ENCODE measurements at regions of chr5 and their contacts with region 1.

Region 1: DNA sequence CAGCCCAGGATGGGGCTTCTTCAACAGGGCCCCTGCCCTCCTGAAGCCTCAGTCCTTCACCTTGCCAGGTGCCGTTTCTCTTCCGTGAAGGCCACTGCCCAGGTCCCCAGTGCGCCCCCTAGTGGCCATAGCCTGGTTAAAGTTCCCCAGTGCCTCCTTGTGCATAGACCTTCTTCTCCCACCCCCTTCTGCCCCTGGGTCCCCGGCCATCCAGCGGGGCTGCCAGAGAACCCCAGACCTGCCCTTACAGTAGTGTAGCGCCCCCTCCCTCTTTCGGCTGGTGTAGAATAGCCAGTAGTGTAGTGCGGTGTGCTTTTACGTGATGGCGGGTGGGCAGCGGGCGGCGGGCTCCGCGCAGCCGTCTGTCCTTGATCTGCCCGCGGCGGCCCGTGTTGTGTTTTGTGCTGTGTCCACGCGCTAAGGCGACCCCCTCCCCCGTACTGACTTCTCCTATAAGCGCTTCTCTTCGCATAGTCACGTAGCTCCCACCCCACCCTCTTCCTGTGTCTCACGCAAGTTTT is 23.6 kb downstream of the PCDHGC5 start:
- DNase-seq: peak; percentile 87
- ATAC-seq: peak; percentile 58
- H3K4me3 Mint-ChIP-seq: peak overlapping the region; percentile 43
- H3K27ac Mint-ChIP-seq: peak overlapping the region; percentile 51
- H3K4me1 Mint-ChIP-seq: peaks cover 39% of the 10 kb centered on the region
- H3K27me3 Mint-ChIP-seq: no peaks in the 10 kb centered on the region

Region 2: GRCh38 chr5:141369994-141370848 is 142.2 kb before region 1 on chr5 and contains the start of gene PCDHGB3:
- CTCF ChIA-PET with region 1: interaction called, 22 read pairs
- POLR2A ChIA-PET with region 1: no interaction called
- DNase-seq: peak; percentile 52
- ATAC-seq: peak; percentile 57
- H3K4me3 Mint-ChIP-seq: peak within 1 kb of the TSS; percentile 63
- H3K27ac Mint-ChIP-seq: no peak within 1 kb of the TSS
- H3K4me1 Mint-ChIP-seq: peaks cover 8% of the 10 kb centered on the region
- H3K27me3 Mint-ChIP-seq: peaks cover 45% of the 10 kb centered on the region
- total RNA-seq, gene PCDHGB3: 0.16 to 0.26 TPM

Region 3: DNA sequence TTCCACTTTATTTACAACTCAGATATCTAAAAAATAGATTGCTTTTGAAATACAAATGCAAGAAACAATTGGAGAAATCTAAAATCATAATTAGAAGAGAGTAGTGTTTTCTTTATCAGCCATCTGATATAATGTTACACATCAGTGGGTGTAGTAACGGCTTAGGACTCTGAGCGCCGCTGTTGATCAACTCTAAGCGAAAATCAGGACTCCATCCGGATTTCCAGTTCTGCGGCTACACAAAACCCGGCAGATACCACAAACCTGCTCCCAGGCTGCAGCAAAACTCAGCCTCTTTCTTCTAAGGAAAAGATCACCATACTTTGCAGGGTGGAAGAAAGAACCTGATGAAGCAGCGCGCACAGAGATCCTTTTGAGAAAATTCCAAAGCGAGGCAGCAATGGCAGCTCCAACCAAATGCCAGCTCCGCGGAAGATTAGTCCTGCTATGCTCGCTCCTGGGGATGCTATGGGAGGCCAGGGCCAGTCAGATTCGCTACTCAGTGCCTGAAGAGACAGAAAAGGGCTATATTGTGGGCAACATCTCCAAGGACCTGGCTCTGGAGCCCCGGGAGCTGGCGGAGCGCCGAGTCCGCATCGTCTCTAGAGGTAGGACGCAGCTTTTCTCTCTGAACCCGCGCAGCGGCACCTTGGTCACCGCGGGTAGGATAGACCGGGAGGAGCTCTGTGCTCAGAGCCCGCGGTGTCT is 109.7 kb before region 1 on chr5 and contains the start of gene PCDHGA9:
- CTCF ChIA-PET with region 1: interaction called, 12 read pairs
- POLR2A ChIA-PET with region 1: no interaction called
- DNase-seq: no peak
- ATAC-seq: no peak
- H3K4me3 Mint-ChIP-seq: peak within 1 kb of the TSS; percentile 26
- H3K27ac Mint-ChIP-seq: no peak within 1 kb of the TSS
- H3K4me1 Mint-ChIP-seq: peaks cover 3% of the 10 kb centered on the region
- H3K27me3 Mint-ChIP-seq: peaks cover 46% of the 10 kb centered on the region
- total RNA-seq, gene PCDHGA9: 0.08 TPM in 1 of 2 experiments, not detected in the other

Region 4: DNA sequence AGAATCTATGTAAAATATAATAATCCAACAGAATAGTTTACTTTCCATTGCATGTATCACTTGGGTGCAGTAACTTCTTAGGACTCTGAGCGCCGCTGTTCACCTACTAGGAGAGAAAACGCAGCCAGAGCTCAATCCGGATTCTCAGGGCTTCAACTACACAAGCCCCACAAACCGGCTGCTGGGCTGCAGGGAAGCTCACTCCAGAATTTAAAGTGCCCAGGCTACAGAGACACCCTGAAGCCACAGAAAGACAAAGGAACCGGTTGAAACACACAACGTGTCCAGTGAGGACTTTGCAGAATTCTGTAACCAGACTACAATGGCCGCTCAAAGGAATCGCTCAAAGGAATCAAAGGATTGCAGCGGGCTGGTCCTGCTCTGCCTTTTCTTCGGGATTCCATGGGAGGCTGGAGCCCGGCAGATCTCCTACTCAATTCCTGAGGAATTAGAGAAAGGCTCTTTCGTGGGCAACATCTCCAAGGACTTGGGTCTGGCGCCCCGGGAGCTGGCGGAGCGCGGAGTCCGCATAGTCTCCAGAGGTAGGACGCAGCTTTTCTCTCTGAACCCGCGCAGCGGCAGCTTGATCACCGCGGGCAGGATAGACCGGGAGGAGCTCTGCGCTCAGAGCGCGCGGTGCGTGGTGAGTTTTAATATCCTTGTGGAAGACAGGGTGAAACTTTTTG is 99.5 kb before region 1 on chr5 and contains the start of gene PCDHGA10:
- CTCF ChIA-PET with region 1: interaction called, 36 read pairs
- POLR2A ChIA-PET with region 1: interaction called, 3 read pairs
- DNase-seq: peak; percentile 71
- ATAC-seq: peak; percentile 75
- H3K4me3 Mint-ChIP-seq: peak within 1 kb of the TSS; percentile 71
- H3K27ac Mint-ChIP-seq: no peak within 1 kb of the TSS
- H3K4me1 Mint-ChIP-seq: peaks cover 26% of the 10 kb centered on the region
- H3K27me3 Mint-ChIP-seq: peaks cover 60% of the 10 kb centered on the region
- total RNA-seq, gene PCDHGA10: not detected

Region 5: DNA sequence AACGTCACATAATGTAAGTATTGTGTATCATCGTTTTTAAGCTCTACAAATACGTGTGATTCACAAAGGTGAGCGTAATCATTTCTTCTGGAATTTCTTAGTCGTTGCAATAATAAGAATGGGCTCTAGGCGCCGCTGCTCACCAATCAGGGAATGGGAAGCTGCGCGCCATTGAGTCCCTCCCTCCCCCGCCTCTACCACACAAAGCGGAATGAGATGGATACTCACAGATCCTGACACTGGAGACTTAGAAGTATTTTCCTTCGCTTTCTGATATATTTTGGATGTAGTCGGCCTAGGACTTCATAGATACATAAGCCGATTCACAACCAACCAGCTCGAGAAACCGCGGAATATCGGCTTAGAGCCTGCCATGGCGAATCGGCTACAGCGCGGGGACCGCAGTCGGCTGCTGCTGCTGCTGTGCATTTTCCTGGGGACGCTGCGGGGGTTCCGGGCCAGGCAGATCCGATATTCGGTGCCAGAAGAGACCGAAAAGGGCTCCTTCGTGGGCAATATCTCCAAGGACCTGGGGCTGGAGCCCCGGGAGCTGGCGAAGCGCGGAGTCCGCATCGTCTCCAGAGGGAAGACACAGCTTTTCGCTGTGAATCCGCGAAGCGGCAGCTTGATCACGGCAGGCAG is 91.5 kb before region 1 on chr5 and contains the start of gene PCDHGA11:
- CTCF ChIA-PET with region 1: interaction called, 28 read pairs
- POLR2A ChIA-PET with region 1: no interaction called
- DNase-seq: peak; percentile 53
- ATAC-seq: no peak
- H3K4me3 Mint-ChIP-seq: peak within 1 kb of the TSS; percentile 69
- H3K27ac Mint-ChIP-seq: peak within 1 kb of the TSS; percentile 35
- H3K4me1 Mint-ChIP-seq: peaks cover 11% of the 10 kb centered on the region
- H3K27me3 Mint-ChIP-seq: peaks cover 62% of the 10 kb centered on the region
- total RNA-seq, gene PCDHGA11: 0.05 TPM in 1 of 2 experiments, not detected in the other

Region 6: DNA sequence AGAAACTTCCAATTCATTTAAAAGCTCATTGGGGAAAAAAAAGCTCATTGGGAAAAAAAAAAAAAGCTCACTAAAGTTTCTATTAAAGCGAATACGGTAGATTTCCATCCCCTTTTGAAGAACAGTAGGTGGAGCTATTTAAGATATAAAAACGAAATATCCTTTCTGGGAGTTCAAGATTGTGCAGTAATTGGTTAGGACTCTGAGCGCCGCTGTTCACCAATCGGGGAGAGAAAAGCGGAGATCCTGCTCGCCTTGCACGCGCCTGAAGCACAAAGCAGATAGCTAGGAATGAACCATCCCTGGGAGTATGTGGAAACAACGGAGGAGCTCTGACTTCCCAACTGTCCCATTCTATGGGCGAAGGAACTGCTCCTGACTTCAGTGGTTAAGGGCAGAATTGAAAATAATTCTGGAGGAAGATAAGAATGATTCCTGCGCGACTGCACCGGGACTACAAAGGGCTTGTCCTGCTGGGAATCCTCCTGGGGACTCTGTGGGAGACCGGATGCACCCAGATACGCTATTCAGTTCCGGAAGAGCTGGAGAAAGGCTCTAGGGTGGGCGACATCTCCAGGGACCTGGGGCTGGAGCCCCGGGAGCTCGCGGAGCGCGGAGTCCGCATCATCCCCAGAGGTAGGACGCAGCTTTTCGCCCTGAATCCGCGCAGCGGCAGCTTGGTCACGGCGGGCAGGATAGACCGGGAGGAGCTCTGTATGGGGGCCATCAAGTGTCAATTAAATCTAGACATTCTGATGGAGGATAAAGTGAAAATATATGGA is 81.9 kb before region 1 on chr5 and contains the start of gene PCDHGA12:
- CTCF ChIA-PET with region 1: interaction called, 10 read pairs
- POLR2A ChIA-PET with region 1: interaction called, 4 read pairs
- DNase-seq: peak; percentile 45
- ATAC-seq: no peak
- H3K4me3 Mint-ChIP-seq: peak within 1 kb of the TSS; percentile 63
- H3K27ac Mint-ChIP-seq: peak within 1 kb of the TSS; percentile 62
- H3K4me1 Mint-ChIP-seq: peaks cover 18% of the 10 kb centered on the region
- H3K27me3 Mint-ChIP-seq: peaks cover 40% of the 10 kb centered on the region
- total RNA-seq, gene PCDHGA12: not detected

Region 7: DNA sequence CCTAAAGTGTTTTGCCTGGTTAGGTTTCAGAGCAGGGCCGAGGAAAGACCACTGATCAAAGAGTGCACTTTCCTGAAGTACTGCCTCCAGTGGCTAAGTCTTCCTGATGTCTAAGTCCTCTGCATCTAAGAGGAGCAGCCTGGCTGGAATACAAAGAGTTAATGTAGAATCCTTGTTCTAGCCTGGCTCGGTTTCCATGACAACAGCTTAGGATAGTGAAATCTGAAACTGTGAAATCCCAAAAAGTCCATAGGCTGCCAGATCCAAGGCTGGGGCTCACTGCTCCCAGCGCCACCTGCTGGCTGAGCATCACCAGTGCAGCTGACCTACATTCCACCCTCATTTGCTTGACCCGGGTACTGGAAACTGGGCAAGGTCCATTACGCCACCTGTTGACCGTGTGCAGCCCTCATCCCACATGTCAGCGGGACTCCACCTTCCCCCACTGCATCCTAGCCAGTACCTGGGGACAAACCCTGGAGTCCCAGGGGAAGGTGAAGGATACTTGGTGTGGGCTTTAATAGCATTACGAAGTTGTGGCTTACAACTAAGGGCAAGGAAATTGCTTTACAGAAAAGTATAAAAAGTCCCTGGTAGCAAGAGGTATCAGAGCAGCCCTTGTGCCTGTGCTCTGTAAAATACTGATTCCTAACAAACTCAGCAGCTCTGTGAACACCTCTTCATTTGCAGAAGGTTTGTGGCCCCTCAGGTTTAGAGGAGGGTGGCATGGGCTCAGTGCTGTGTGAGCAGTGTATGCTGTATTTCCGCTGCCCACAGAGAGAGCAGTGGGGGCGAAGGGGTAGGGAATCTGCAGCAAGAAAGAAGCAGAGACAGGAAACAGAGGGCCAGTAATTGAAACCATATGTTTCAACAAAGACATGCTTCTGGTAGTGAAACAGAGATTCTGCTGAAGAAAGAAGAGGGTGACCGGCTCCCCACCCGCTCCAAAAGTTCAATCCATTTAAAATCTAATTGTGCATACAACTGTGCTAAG is 12.5 kb after region 1 on chr5:
- CTCF ChIA-PET with region 1: interaction called, 64 read pairs
- POLR2A ChIA-PET with region 1: no interaction called
- DNase-seq: peak; percentile 58
- ATAC-seq: peak; percentile 75
- H3K4me3 Mint-ChIP-seq: no peak overlapping the region
- H3K27ac Mint-ChIP-seq: peak overlapping the region; percentile 75
- H3K4me1 Mint-ChIP-seq: peaks cover 32% of the 10 kb centered on the region
- H3K27me3 Mint-ChIP-seq: no peaks in the 10 kb centered on the region

Measured in activated CD8-positive, alpha-beta T cell treated with anti-CD3 and anti-CD28 coated beads, Interleukin-2, amount 10 ng/mL, durations not matched to agents 7 days and 5 days (primary cell).